Ascending aorta (tissue), 2 donors: ENCODE measurements at regions of chr10 and their contacts with region 1.

Region 1: DNA sequence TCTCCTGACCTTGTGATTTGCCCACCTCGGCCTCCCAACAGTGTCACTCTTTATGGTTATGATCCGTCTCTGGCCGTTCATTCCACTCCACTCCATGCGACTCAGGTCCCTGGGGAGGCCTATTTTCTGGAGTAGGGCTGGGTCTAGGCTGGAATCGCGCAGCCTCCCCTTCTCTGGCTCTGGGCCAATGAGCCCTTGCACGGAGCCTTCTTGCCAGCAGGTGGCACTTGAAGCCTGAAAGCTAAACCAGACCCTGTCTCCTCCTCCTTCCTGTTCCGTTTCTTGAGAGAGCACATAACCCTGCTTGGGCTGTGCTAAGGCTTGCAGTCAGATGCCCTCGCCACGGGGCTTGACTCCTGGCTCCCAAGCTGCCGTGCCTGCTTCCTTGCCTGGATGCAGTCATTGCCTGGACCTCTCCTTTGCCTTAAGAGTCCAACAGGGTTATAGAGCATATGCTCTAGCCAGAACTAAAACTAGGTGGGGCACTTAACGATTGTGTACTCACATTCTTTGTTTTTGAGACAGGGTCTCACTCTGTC is 9.6 kb upstream of the DNAJB12 start:
- DNase-seq: peak; percentile 68 to 97
- H3K4me3 ChIP-seq: peak overlapping the region; percentile 3 to 47
- H3K27ac ChIP-seq: peak overlapping the region; percentile 67 to 74
- H3K4me1 ChIP-seq: peaks cover 0 to 3% of the 10 kb centered on the region in 2 donors
- H3K27me3 ChIP-seq: no peaks in the 10 kb centered on the region
- CTCF ChIP-seq: peak; percentile 85 to 94 (median 92)

Region 2: DNA sequence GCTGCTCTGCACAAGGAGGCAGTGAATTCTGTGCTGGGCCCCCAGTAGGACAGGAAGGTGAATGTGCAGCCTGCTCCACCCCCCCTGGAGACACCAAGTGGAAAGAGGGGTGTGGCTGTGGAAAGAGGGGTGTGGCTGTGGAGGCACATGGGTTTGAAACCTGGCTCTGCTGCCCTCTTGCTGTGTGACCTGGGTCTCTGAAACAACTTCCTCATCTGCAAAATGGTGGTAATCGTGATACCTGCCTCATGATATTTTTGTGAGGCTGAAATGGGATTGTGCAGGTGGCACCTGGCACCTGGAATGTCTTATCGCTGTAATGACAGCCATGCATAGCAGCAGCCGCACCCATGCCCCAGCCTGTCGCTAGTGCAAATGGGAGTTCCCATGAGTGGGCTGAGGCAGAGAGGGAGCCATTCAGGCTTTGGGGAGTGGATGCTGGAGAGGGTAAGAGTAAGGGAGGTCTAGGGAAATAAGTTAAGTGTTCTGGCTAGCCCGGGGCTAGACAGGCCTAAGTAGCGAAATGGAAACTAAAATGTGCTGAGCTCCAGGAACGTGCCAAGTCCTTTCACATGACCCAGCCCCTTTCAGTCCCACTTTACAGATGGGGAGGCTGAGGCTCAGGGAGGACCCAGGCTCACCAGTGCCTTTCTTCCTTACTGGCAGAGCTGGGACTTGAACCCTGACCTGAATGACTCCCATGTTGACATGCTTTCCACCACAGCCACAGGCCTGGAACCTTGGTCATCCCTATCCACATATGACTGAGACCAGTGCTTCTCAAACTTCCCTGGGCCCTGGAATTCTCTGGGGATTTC is 679.7 kb before region 1 on chr10:
- intact Hi-C with region 1: no loop called
- DNase-seq: no peak
- H3K4me3 ChIP-seq: no peak overlapping the region
- H3K27ac ChIP-seq: no peak overlapping the region
- H3K4me1 ChIP-seq: no peaks in the 10 kb centered on the region
- H3K27me3 ChIP-seq: no peaks in the 10 kb centered on the region
- CTCF ChIP-seq: no peak

Region 3: DNA sequence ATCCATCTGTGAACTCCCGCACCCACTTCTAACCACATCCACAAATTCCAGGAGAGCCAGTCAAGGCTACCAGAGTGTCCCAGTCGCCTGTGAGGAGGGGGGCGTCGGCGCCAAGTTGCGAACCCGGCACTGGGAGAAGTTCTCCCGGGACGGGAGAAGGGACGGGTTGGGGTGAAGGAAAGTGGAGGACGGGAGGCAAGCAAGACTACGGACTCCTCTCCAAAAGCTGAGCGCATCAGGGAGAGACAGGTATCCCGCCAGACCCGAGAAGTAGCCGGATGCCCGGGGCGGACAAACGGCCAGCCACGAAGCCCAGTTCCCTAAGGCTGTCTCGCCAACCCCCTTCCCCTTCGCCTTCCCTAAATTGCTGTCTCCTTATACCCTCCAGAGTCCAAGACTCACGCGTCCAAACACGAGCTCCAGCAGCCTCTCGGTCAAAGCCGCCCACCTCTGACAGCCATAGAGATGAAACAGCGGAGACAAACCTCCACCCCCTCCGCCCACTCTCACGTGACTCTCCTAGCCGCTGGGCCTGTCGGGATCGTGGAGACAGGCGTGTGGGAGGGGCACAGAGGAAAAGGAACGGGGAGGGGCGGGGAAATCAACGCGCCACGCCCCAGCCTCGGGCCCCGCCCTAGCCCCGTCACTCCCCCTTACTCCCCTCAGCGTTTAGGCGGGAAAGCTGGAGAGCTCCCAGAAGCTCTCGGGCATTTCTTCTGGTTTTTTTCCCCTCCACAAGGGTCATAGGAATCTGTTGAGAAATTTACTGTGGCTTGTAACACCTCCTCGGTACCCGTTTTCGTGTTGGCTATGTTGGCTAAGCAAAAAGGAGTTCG is 261.5 kb after region 1 on chr10 and contains the start of gene MICU1:
- intact Hi-C with region 1: loop called (anchors 1 kb)
- DNase-seq: peak; percentile 91 to 98
- H3K4me3 ChIP-seq: peak within 1 kb of the TSS; percentile 79 to 95
- H3K27ac ChIP-seq: peak within 1 kb of the TSS; percentile 82 to 91
- H3K4me1 ChIP-seq: peaks cover 3 to 8% of the 10 kb centered on the region in 2 donors
- H3K27me3 ChIP-seq: no peaks in the 10 kb centered on the region
- CTCF ChIP-seq: no peak
- total RNA-seq, gene MICU1: 18.9 TPM

Region 4: DNA sequence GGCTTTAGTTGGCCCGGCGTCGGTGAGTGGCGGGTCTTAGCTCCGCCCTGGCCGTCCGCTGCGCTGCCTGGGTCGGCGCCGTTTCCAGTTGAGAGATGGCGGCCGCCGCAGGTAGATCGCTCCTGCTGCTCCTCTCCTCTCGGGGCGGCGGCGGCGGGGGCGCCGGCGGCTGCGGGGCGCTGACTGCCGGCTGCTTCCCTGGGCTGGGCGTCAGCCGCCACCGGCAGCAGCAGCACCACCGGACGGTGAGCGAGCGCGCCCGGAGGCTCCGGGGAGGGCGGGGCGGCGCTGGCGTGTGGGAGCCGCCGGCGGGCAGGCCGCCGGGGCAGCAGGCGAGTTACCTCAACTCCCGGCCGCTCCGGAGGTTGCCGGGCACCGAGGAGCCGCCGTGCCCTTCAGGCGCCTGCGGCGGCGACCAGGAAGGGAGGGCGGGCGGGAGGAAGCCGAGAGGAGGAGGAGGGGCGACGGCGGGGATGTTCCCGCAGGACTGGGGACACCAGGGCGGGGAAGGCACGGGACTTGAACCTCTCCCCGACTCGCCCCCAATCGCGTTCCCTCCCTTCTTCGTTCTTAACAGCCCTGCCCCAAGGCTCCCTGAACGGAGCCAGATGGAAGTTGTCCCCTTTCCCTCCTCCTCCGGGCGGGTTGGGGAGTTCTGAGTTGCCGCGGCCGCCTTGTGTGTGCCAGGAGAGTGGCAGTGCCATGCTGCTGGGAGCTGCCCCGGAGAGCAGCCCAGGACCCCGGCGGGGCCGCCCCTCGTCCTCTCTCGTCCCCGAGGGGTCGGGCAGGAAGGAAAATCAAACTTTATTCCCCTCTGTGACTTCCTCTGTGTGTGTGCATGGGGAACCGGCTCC is 328.0 kb after region 1 on chr10 and contains the start of gene MCU:
- intact Hi-C with region 1: loop called (anchors 5 kb)
- DNase-seq: peak; percentile 84 to 98
- H3K4me3 ChIP-seq: peak within 1 kb of the TSS; percentile 94 to 97
- H3K27ac ChIP-seq: peak within 1 kb of the TSS; percentile 92 to 94
- H3K4me1 ChIP-seq: peaks cover 0 to 21% of the 10 kb centered on the region in 2 donors
- H3K27me3 ChIP-seq: no peaks in the 10 kb centered on the region
- CTCF ChIP-seq: no peak
- total RNA-seq, gene MCU: 22.0 TPM

Region 5: GRCh38 chr10:72834183-72834825 is 470.0 kb after region 1 on chr10:
- intact Hi-C with region 1: loop called (anchors 2 kb)
- DNase-seq: peak in 1 of 2 donors; percentile 66
- H3K4me3 ChIP-seq: no peak overlapping the region
- H3K27ac ChIP-seq: no peak overlapping the region
- H3K4me1 ChIP-seq: peaks cover 0 to 3% of the 10 kb centered on the region in 2 donors
- H3K27me3 ChIP-seq: no peaks in the 10 kb centered on the region
- CTCF ChIP-seq: peak; percentile 53 to 70 (median 63)

Region 6: GRCh38 chr10:72875250-72876055 is 511.1 kb after region 1 on chr10:
- intact Hi-C with region 1: loop called (anchors 2 kb)
- DNase-seq: no peak
- H3K4me3 ChIP-seq: no peak overlapping the region
- H3K27ac ChIP-seq: no peak overlapping the region
- H3K4me1 ChIP-seq: no peaks in the 10 kb centered on the region
- H3K27me3 ChIP-seq: no peaks in the 10 kb centered on the region
- CTCF ChIP-seq: peak in 1 of 3 experiments; percentile 55

Region 7: GRCh38 chr10:73060738-73061635 is 696.7 kb after region 1 on chr10:
- intact Hi-C with region 1: loop called (anchors 5 kb)
- DNase-seq: no peak
- H3K4me3 ChIP-seq: no peak overlapping the region
- H3K27ac ChIP-seq: peak overlapping the region in 1 of 2 donors; percentile 24
- H3K4me1 ChIP-seq: no peaks in the 10 kb centered on the region
- H3K27me3 ChIP-seq: no peaks in the 10 kb centered on the region
- CTCF ChIP-seq: peak in 1 of 3 experiments; percentile 47